H1 (cell line): ENCODE measurements at regions of chr1 and their contacts with region 1.

Region 1: GRCh38 chr1:212368073-212368484 is 46.6 kb downstream of the PACC1 start:
- DNase-seq: peak; percentile 21 to 58
- H3K4me3 ChIP-seq: no peak overlapping the region
- H3K27ac ChIP-seq: no peak overlapping the region
- H3K4me1 ChIP-seq: no peaks in the 10 kb centered on the region
- H3K27me3 ChIP-seq: no peaks in the 10 kb centered on the region
- CTCF ChIP-seq: peak in 2 of 3 experiments; percentile 68 to 91; a peak in 3 of 4 replicates
- EP300 ChIP-seq: no peak
- POLR2A ChIP-seq: no peak
- RAD21 ChIP-seq: peak; percentile 89 to 92

Region 2: GRCh38 chr1:212062832-212063438 is 305.1 kb before region 1 on chr1:
- CTCF ChIA-PET with region 1: interaction called, 33 read pairs
- POLR2A ChIA-PET with region 1: interaction called, 3 read pairs
- DNase-seq: no peak
- H3K4me3 ChIP-seq: no peak overlapping the region
- H3K27ac ChIP-seq: no peak overlapping the region
- H3K4me1 ChIP-seq: no peaks in the 10 kb centered on the region
- H3K27me3 ChIP-seq: no peaks in the 10 kb centered on the region
- CTCF ChIP-seq: peak in 2 of 3 experiments; percentile 10 to 35; a peak in 2 of 4 replicates
- EP300 ChIP-seq: no peak
- POLR2A ChIP-seq: no peak
- RAD21 ChIP-seq: peak; percentile 17 to 28; a peak in 3 of 4 replicates

Region 3: GRCh38 chr1:212291505-212292134 is 76.5 kb before region 1 on chr1:
- CTCF ChIA-PET with region 1: interaction called, 11 read pairs
- POLR2A ChIA-PET with region 1: no interaction called
- DNase-seq: no peak
- H3K4me3 ChIP-seq: no peak overlapping the region
- H3K27ac ChIP-seq: no peak overlapping the region
- H3K4me1 ChIP-seq: peaks cover 0 to 14% (median 7%) of the 10 kb centered on the region in 4 experiments; a peak in 4 of 7 replicates
- H3K27me3 ChIP-seq: no peaks in the 10 kb centered on the region
- CTCF ChIP-seq: peak in 2 of 3 experiments; percentile 59 to 75; a peak in 2 of 4 replicates
- EP300 ChIP-seq: no peak
- POLR2A ChIP-seq: no peak
- RAD21 ChIP-seq: peak; percentile 76 to 80

Region 4: GRCh38 chr1:212344905-212345304 is 23.2 kb before region 1 on chr1:
- CTCF ChIA-PET with region 1: interaction called, 13 read pairs
- POLR2A ChIA-PET with region 1: no interaction called
- DNase-seq: no peak
- H3K4me3 ChIP-seq: no peak overlapping the region
- H3K27ac ChIP-seq: no peak overlapping the region
- H3K4me1 ChIP-seq: no peaks in the 10 kb centered on the region
- H3K27me3 ChIP-seq: no peaks in the 10 kb centered on the region
- CTCF ChIP-seq: no peak
- EP300 ChIP-seq: no peak
- POLR2A ChIP-seq: no peak
- RAD21 ChIP-seq: no peak